ENCODE measurements at regions of chr10 and their contacts with region 1.

Region 1: DNA sequence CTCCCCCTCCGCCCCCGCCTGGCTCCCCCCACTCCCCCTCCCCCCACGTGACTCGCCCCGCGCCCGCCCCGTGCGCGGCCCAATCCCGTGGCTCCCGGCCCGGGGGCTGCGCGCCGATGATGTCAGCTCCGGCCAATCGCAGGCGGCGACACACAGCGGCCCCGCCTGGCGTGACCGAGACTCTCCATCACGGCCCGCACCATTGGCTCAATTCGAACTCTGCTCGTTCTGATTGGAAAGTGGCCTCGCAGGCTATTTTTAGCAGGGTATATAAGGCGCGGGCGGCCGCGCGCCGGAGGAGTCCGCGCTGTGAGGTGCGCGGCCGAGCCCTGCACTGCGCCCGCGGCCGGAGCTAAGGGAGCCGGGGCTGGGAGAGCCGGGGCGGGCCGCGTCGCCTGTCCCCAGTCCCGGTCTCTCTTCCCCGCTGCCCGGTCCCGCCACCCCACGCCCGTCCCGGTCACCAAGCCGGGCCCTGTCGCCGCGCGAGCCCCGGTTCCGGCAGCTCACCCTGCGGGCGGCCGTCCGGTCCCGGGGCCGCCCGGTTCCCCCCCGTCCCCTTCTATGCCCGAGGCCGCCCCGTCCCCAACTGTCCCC is 345 bp upstream of the KLF6 start:
- DNase-seq: peak; percentile 95
- ATAC-seq: peak; percentile 75
- H3K4me3 ChIP-seq: peak overlapping the region; percentile 69 to 98 (median 96)
- H3K27ac ChIP-seq: peak overlapping the region; percentile 99
- H3K4me1 ChIP-seq: peaks cover 51% of the 10 kb centered on the region
- H3K27me3 ChIP-seq: no peaks in the 10 kb centered on the region; a peak in 1 of 5 replicates
- CTCF ChIP-seq: no peak
- EP300 ChIP-seq: 0 out of 4 replicates have a peak, but pooled peaks of 1 of the 2 experiments have one; percentile 5
- POLR2A ChIP-seq: peak; percentile 88 to 94
- RAD21 ChIP-seq: peak; percentile 84

Region 2: DNA sequence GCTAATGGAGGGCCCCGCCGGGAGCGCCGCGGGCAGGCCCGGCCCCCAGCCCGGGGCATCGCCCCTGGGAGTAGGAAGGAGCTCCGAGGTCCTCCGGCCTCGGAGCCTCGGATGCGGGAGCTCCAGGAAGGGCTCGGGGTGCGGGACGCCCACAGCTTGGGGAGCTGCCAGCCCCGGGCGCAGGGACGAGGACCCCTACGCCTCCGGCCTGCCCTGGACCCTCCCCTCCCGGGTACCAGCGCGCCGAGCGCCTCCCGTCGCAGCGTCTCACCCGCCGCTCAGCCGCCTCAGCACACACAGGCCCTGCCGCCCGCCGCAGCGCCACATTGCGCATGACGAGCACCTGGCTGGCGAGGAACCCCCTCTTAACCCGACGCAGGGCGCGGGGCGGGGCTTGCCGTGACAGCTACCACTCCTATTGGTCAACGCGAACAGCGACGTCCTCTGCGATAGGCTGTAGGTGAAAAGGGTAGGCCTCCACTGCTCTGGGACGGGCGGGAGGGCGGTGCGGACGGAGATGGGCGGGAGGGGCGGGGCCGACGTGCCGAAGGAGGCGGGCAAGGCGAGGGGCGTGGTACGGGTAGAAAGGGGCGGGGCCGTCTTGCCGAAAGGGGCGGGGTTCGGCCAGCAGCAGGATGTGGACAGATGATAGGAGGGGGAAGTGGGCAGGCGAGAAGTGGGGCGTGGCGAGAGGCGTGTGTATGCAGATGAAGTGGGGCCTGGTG is 612.7 kb before region 1 on chr10 and contains the start of gene PITRM1:
- CTCF ChIA-PET with region 1: no interaction called
- POLR2A ChIA-PET with region 1: interaction called, 11 read pairs
- in situ Hi-C with region 1: no loop called
- intact Hi-C with region 1: no loop called
- DNase-seq: peak; percentile 96
- ATAC-seq: peak; percentile 97
- H3K4me3 ChIP-seq: peak within 1 kb of the TSS; percentile 75 to 89 (median 79)
- H3K27ac ChIP-seq: peak within 1 kb of the TSS; percentile 53
- H3K4me1 ChIP-seq: peaks cover 17% of the 10 kb centered on the region
- H3K27me3 ChIP-seq: no peaks in the 10 kb centered on the region; a peak in 1 of 5 replicates
- CTCF ChIP-seq: peak; percentile 34; the same call in 1 of the 2 replicates
- EP300 ChIP-seq: no peak
- POLR2A ChIP-seq: peak; percentile 95 to 99
- RAD21 ChIP-seq: 0 out of 2 replicates have a peak, but pooled peaks have one; percentile 27
- total RNA-seq, gene PITRM1: 29.0 and 32.7 TPM in 2 replicates

Region 3: GRCh38 chr10:3708852-3709251 is 76.5 kb before region 1 on chr10:
- CTCF ChIA-PET with region 1: no interaction called
- POLR2A ChIA-PET with region 1: no interaction called
- in situ Hi-C with region 1: no loop called
- intact Hi-C with region 1: no loop called
- DNase-seq: no peak
- ATAC-seq: no peak
- H3K4me3 ChIP-seq: no peak overlapping the region
- H3K27ac ChIP-seq: no peak overlapping the region
- H3K4me1 ChIP-seq: no peaks in the 10 kb centered on the region
- H3K27me3 ChIP-seq: peaks cover 0 to 3% of the 10 kb centered on the region in 2 experiments; a peak in 1 of 5 replicates
- CTCF ChIP-seq: no peak
- EP300 ChIP-seq: no peak
- POLR2A ChIP-seq: no peak
- RAD21 ChIP-seq: no peak

Region 4: DNA sequence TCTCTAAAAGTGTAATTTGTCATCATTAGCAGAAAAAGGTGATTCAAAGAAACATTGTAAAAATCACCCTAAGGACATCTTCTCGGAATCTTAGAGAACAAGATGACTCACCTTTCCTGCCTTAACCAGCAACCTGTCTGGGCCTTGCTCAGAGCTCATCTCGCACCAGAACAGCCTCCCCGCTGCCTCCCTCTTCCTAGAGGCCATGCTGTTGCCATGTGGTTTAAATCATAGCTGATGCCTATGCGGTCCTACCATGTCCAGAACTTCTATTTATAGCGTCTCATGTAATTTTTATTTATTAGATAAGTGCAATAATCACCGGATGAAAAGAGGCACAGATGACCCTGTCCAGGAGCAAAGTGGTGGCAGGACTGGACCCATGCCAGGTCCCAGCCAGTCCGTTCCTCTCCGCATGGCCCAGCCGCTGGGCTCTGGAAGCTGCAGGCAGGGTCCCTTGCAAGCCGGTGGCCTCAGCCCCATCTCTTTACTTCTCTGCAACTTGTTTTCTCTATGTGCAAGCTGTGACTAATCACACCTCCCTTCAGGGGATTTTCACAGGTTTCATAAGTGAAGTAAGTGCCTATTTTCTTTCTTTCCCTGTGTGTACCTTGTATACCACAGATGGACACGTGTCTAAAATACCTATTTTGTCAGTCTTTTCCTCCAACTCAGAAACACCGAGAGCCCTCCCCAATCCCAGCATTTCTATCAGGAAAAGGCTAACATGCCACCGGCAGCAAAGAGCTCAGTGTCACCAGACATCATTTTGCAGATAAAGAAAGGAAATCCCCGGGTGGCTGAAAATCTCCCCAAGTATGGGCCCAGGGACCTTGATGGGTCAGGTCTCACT is 27.5 kb before region 1 on chr10:
- CTCF ChIA-PET with region 1: no interaction called
- POLR2A ChIA-PET with region 1: interaction called, 16 read pairs
- in situ Hi-C with region 1: no loop called
- intact Hi-C with region 1: no loop called
- DNase-seq: no peak
- ATAC-seq: no peak
- H3K4me3 ChIP-seq: no peak overlapping the region
- H3K27ac ChIP-seq: no peak overlapping the region
- H3K4me1 ChIP-seq: peaks cover 65% of the 10 kb centered on the region
- H3K27me3 ChIP-seq: peaks cover 0 to 11% of the 10 kb centered on the region in 2 experiments; a peak in 2 of 5 replicates
- CTCF ChIP-seq: no peak
- EP300 ChIP-seq: no peak
- POLR2A ChIP-seq: no peak
- RAD21 ChIP-seq: no peak

Region 5: DNA sequence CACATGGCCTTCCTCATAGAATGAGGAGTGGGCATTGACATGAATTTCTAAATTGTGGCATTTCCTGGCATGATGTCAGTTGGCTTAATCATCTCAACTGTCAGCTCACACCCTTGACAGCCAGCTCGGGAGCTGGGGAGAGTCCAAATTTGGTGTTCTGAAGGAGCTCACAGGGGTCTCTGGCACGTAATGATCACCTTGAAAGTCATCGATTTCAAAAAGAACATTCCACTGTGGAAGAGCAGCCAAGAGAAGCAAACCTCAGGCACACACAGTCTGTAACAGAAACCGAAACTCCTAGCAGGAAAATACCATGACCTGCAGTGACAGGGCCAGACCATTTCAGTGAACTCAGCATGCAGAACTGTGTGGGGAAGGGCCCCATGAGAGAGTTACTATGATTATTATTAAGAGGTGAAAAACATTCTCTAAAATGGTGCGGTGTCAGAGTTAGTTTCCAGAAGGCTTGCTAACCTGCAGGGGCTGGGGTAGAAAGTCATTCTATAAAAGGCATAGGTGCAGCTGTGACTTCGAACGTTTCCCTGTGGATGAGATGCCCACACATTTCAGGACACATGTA is 26.0 kb after region 1 on chr10:
- CTCF ChIA-PET with region 1: no interaction called
- POLR2A ChIA-PET with region 1: interaction called, 217 read pairs
- in situ Hi-C with region 1: no loop called
- intact Hi-C with region 1: loop called (anchors 1 kb)
- DNase-seq: no peak
- ATAC-seq: 0 out of 3 replicates have a peak, but pooled peaks have one; percentile 12
- H3K4me3 ChIP-seq: peak overlapping the region in 1 of 3 experiments; percentile 7; a peak in 1 of 6 replicates
- H3K27ac ChIP-seq: peak overlapping the region; percentile 97
- H3K4me1 ChIP-seq: peaks cover 80% of the 10 kb centered on the region
- H3K27me3 ChIP-seq: no peaks in the 10 kb centered on the region
- CTCF ChIP-seq: no peak
- EP300 ChIP-seq: no peak
- POLR2A ChIP-seq: no peak
- RAD21 ChIP-seq: no peak

Region 6: GRCh38 chr10:3879073-3879472 is 93.7 kb after region 1 on chr10:
- CTCF ChIA-PET with region 1: no interaction called
- POLR2A ChIA-PET with region 1: interaction called, 10 read pairs
- in situ Hi-C with region 1: no loop called
- intact Hi-C with region 1: no loop called
- DNase-seq: peak; percentile 73
- ATAC-seq: peak; percentile 74
- H3K4me3 ChIP-seq: peak overlapping the region; percentile 18 to 46 (median 26); a peak in 3 of 6 replicates
- H3K27ac ChIP-seq: peak overlapping the region; percentile 49
- H3K4me1 ChIP-seq: peaks cover 24% of the 10 kb centered on the region
- H3K27me3 ChIP-seq: no peaks in the 10 kb centered on the region
- CTCF ChIP-seq: no peak
- EP300 ChIP-seq: peak in 1 of 2 experiments; percentile 46; a peak in 1 of 4 replicates
- POLR2A ChIP-seq: 0 out of 4 replicates have a peak, but pooled peaks of 1 of the 2 experiments have one; percentile 25
- RAD21 ChIP-seq: no peak

Region 7: DNA sequence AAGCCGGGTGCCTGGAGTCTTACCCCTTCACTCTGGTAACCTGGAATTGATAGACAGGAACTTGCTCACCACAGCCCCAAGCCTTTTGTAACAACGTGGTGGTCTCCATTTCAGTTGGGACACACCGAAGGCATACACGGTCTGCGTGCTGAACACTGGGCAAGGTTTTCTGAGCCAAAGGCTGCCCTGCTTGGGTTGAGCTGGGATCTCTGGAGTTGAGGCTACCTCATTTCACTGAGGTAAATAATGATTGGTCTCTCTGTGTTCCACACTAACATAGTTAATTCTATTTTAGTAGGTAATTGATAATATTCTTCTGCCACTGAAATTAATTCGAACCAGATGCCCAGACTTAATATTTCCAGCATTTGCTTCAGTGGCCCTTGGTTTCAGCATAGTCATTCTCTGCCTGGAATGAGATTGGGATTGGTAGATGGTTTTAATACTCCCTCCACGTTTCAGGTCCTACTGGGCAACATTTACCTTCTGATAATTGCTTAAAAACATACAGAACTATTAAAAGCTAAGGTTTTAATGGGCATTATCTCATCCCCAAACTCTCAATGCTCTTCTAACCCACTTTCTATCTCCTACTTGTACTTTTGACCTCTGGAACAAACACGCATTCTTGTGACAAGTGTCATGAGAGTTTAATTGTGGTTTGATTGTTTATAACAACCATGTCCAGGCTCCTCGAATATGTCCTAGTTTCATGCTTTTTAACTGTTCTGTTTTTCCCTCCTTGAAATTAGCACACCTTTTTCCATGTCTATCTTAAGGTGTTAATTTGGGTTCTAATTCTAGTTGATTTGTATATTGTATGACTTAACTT is 202.0 kb after region 1 on chr10:
- CTCF ChIA-PET with region 1: no interaction called
- POLR2A ChIA-PET with region 1: no interaction called
- in situ Hi-C with region 1: no loop called
- intact Hi-C with region 1: no loop called
- DNase-seq: no peak
- ATAC-seq: no peak
- H3K4me3 ChIP-seq: no peak overlapping the region
- H3K27ac ChIP-seq: no peak overlapping the region
- H3K4me1 ChIP-seq: no peaks in the 10 kb centered on the region; the same call in 1 of the 2 replicates
- H3K27me3 ChIP-seq: peaks cover 5 to 39% of the 10 kb centered on the region in 2 experiments; a peak in 4 of 5 replicates
- CTCF ChIP-seq: no peak
- EP300 ChIP-seq: no peak
- POLR2A ChIP-seq: no peak
- RAD21 ChIP-seq: no peak

Region 8: DNA sequence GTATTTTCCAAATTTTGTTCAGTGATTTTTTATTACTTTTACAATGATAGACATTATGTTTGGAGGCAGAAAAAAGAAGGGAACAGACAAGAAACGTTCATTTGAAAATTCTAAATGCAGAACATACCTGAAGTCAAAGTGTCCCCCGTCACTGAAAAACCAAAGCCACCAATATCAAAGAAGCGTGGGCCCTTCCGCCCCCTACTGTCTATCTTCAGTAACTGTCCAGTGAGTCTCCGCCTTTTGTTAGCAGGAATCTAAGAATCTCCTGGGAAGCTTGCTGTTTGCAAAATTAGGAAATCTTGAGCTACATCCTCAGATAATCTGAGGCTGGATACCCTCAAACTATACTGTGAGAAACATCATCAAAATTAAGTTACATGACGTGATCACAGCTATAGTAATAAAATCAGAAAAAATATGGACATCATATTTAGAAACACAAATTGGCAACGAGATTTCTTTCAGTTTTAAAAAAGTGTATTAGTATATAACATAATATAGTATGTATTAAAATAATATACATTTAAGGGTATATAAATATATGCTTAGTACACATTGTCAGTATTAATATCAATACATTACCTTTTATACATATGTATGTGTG is 871.3 kb after region 1 on chr10:
- CTCF ChIA-PET with region 1: no interaction called
- POLR2A ChIA-PET with region 1: interaction called, 3 read pairs
- in situ Hi-C with region 1: no loop called
- intact Hi-C with region 1: loop called (anchors 5 kb)
- DNase-seq: peak; percentile 44
- ATAC-seq: no peak
- H3K4me3 ChIP-seq: no peak overlapping the region
- H3K27ac ChIP-seq: no peak overlapping the region
- H3K4me1 ChIP-seq: peaks cover 21% of the 10 kb centered on the region
- H3K27me3 ChIP-seq: peaks cover 0 to 14% of the 10 kb centered on the region in 2 experiments; a peak in 1 of 5 replicates
- CTCF ChIP-seq: peak; percentile 80
- EP300 ChIP-seq: no peak
- POLR2A ChIP-seq: no peak
- RAD21 ChIP-seq: peak; percentile 53; the same call in 1 of the 2 replicates

Measured in HepG2 (cell line).